A549 (cell line): ENCODE measurements at regions of chr1 and their contacts with region 1.

Region 1: DNA sequence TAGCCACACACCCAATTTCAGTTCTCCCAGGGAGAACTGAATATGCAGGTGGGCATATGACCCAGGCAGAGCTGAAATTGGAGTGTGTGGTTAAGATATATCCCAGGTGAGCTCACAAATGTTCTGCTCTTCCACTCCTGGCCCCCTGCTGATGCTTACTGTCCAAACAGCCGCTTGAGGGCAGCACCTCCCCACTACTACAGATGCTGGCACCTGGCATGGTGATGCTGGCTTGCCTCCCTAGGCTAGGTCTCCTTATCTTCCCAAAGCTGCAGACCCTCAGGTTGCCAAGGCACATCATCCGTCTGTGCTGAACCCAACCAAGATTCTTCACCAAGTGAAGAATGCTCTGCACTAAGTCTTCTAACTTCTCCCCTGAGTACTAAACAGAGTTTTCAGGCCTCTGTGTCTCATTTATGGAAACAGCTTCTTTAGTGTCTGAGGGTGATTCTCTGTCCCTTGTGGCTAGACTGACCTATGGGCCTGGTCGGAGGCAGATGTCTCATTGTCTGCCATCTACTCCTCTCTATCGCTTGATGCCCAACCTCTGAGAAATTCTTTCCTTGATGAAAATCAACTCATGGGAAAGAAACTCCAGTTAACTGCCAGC is 27.2 kb downstream of the XCL1 start:
- DNase-seq: peak; percentile 45 to 73
- ATAC-seq: peak; percentile 98 to 100
- H3K4me3 ChIP-seq: no peak overlapping the region
- H3K27ac ChIP-seq: peak overlapping the region; percentile 12 to 38; a peak in 2 of 6 replicates
- H3K4me1 ChIP-seq: 0 out of 3 replicates have a peak, but pooled peaks cover 3% of the 10 kb centered on the region
- CTCF ChIP-seq: peak; percentile 85
- EP300 ChIP-seq: no peak
- POLR2A ChIP-seq: no peak
- RAD21 ChIP-seq: peak; percentile 96 to 98

Region 2: DNA sequence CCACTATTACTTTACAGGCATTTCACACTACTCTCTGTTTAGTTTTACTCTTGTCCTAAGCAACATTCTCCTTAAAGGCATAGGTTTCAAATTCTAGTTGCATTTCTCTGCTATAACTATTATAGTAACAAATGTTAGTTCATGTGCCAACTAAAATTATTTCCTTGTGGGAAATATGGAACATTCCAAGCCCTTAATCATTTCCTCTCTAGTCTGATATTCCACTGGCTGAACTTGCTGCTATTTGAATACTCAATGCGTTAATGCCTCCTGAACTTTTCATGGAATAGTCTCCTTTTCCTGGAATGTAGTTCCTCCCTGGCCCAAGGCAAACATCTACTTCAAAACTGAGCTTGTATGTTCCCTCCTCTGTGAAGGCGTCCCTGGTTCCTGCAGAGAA is 342.2 kb before region 1 on chr1:
- CTCF ChIA-PET with region 1: no interaction called
- POLR2A ChIA-PET with region 1: no interaction called
- DNase-seq: no peak
- ATAC-seq: no peak
- H3K4me3 ChIP-seq: no peak overlapping the region
- H3K27ac ChIP-seq: no peak overlapping the region
- H3K4me1 ChIP-seq: no peaks in the 10 kb centered on the region
- CTCF ChIP-seq: no peak
- EP300 ChIP-seq: no peak
- POLR2A ChIP-seq: no peak
- RAD21 ChIP-seq: no peak

Region 3: GRCh38 chr1:168439456-168440375 is 163.9 kb before region 1 on chr1:
- CTCF ChIA-PET with region 1: interaction called, 16 read pairs
- POLR2A ChIA-PET with region 1: no interaction called
- DNase-seq: peak; percentile 60 to 86
- ATAC-seq: peak; percentile 95 to 99
- H3K4me3 ChIP-seq: no peak overlapping the region
- H3K27ac ChIP-seq: peak overlapping the region; percentile 10 to 61; a peak in 3 of 6 replicates
- H3K4me1 ChIP-seq: no peaks in the 10 kb centered on the region
- CTCF ChIP-seq: peak; percentile 92
- EP300 ChIP-seq: no peak
- POLR2A ChIP-seq: no peak
- RAD21 ChIP-seq: peak; percentile 96

Region 4: DNA sequence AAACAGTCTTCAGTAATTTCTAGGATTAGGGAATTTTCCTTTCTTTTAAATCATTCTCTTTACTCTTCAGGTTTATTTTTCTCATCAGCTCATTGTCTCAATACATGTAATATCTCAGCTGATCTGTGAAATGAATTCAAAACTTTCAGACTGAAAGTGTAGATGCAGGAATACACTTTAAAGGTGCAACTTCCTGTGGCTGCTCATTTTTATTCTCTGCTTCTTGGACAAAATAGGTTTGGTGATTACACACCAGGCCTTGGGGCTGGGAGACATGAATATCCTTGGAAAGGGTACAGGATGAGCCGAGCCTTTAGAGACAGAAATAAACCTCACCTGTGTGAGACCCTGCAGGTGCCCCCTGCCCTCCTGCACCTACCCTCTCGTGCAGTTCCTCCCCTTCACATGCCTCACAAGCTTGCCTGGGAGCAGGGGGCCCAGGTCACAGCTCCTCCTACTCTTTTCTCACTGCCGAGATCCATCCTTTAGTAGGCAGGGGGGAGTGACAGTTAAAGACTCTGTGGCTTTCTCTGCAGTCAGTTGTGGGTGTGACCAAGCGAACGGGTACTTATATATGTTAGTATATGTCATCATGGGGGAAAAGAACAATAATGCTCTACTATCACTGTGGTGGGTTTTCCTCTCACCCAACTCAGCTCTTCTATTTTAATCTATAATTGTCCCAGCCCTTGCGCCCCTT is 83.4 kb before region 1 on chr1:
- CTCF ChIA-PET with region 1: no interaction called
- POLR2A ChIA-PET with region 1: no interaction called
- DNase-seq: no peak
- ATAC-seq: no peak
- H3K4me3 ChIP-seq: no peak overlapping the region
- H3K27ac ChIP-seq: no peak overlapping the region
- H3K4me1 ChIP-seq: no peaks in the 10 kb centered on the region
- CTCF ChIP-seq: no peak
- EP300 ChIP-seq: no peak
- POLR2A ChIP-seq: no peak
- RAD21 ChIP-seq: no peak

Region 5: DNA sequence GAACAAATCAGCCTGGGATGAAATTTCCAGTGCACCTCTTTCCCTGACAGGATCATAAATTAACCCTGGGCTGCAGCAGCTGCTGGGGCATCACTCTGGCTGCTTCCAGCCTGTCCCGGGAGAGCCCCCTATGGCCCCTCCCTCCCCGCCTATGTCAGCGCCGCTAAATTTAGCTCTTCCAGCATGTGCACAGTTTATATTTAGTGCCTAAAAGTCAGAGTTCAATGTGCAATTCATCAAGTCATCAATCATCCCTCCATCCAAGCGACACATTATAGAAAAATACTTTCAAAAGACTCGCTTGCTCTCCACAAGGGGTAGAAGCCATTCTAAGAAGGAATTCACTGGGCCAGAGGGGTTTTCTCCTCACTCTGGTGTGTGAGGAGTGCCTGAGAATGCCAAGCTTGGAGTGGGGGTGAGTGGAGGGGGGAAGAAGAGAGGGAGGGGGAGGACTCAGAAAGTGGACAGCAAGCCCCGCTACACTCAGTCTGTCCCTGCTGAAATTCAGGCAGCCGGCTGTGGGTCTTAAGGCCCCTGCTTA is 10.2 kb after region 1 on chr1:
- CTCF ChIA-PET with region 1: interaction called, 40 read pairs
- POLR2A ChIA-PET with region 1: no interaction called
- DNase-seq: no peak
- ATAC-seq: no peak
- H3K4me3 ChIP-seq: no peak overlapping the region
- H3K27ac ChIP-seq: no peak overlapping the region
- H3K4me1 ChIP-seq: no peaks in the 10 kb centered on the region
- CTCF ChIP-seq: no peak
- EP300 ChIP-seq: no peak
- POLR2A ChIP-seq: no peak
- RAD21 ChIP-seq: no peak

Region 6: DNA sequence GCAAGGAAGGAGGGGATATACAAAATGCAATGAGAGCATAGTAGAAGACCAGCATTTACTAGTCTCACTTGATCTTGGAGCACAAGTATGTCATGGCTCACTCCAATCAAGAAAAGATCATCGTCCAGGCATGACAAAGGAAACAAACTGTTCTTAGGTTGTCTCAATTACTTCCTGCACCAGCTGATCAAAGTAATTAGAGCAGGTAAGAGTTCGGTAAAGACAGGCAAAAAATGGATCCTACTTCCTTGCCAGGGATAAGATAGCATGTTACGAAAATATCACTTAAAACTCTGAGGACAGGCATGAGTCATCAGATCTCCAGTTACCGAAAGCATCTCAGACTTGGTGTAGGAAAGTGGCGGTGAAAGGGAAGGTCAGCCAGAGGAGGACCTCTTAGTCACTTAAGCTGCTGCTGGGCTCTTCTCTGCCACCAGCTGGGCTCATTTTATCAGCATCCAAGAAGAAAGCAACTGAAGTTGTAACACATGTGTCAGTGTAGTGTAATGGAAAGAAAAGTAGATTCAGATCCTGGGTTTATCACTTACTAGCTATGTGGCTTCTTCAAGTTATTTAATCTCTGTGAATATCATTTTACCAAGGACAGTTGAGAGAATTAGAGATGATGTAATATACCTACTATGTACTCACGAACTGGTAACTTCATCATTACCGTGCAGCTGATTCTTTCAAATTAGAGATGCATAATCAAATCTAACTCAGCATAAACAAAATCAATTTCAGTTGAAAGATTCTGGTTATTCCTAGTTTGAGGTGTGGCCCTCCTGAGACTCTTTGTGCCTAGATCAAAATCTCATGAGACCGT is 19.6 kb after region 1 on chr1:
- CTCF ChIA-PET with region 1: interaction called, 20 read pairs
- POLR2A ChIA-PET with region 1: no interaction called
- DNase-seq: peak; percentile 31 to 85
- ATAC-seq: peak; percentile 94 to 97
- H3K4me3 ChIP-seq: no peak overlapping the region
- H3K27ac ChIP-seq: peak overlapping the region; percentile 47 to 70; a peak in 5 of 6 replicates
- H3K4me1 ChIP-seq: peaks cover 25% of the 10 kb centered on the region
- CTCF ChIP-seq: 0 out of 3 replicates have a peak, but pooled peaks have one; percentile 13
- EP300 ChIP-seq: no peak
- POLR2A ChIP-seq: no peak
- RAD21 ChIP-seq: peak in 1 of 2 experiments; percentile 34; a peak in 2 of 5 replicates

Region 7: GRCh38 chr1:168709405-168710305 is 106.0 kb after region 1 on chr1:
- CTCF ChIA-PET with region 1: interaction called, 10 read pairs
- POLR2A ChIA-PET with region 1: interaction called, 3 read pairs
- DNase-seq: peak; percentile 77 to 90
- ATAC-seq: peak; percentile 84 to 86
- H3K4me3 ChIP-seq: peak overlapping the region; percentile 24; the same call in 2 of the 3 replicates
- H3K27ac ChIP-seq: peak overlapping the region; percentile 87 to 89
- H3K4me1 ChIP-seq: peaks cover 31% of the 10 kb centered on the region
- CTCF ChIP-seq: no peak
- EP300 ChIP-seq: peak; percentile 82 to 86; a peak in 4 of 5 replicates
- POLR2A ChIP-seq: no peak
- RAD21 ChIP-seq: peak; percentile 36 to 50; a peak in 3 of 5 replicates

Region 8: DNA sequence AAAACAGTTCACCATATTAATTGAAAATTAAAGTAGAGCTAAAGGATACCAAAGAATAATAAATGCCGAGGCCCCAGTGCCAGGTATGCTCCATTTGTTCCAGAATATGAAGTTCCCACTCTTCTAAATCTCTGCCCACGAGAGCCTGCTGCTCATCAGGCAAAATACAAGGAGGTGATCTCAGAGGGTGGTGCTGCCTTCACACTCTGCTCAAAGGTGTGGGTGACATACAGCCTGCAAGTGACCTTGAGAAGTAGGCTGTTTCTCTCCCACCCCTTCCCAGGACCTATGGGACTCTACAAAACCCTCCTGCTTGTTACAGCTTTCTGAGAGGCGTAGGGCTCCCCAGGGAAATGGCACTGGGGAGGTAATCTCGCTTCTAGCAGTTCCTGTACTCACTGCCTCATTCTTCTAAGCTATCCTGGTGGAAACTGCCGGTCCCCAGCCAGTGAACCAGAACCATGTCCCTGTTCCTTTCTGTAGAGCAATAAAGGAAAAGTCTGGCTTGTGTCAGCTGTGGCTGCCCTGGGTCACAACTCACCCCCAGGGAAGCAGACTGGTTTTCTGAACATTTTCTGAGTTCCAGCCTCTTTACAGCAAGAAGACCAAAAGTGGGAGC is 152.3 kb after region 1 on chr1:
- CTCF ChIA-PET with region 1: no interaction called
- POLR2A ChIA-PET with region 1: no interaction called
- DNase-seq: no peak
- ATAC-seq: no peak
- H3K4me3 ChIP-seq: no peak overlapping the region
- H3K27ac ChIP-seq: 0 out of 6 replicates have a peak overlapping the region, but pooled peaks of 1 of the 2 experiments have one; percentile 16
- H3K4me1 ChIP-seq: peaks cover 22% of the 10 kb centered on the region
- CTCF ChIP-seq: no peak
- EP300 ChIP-seq: no peak
- POLR2A ChIP-seq: no peak
- RAD21 ChIP-seq: no peak

Region 9: DNA sequence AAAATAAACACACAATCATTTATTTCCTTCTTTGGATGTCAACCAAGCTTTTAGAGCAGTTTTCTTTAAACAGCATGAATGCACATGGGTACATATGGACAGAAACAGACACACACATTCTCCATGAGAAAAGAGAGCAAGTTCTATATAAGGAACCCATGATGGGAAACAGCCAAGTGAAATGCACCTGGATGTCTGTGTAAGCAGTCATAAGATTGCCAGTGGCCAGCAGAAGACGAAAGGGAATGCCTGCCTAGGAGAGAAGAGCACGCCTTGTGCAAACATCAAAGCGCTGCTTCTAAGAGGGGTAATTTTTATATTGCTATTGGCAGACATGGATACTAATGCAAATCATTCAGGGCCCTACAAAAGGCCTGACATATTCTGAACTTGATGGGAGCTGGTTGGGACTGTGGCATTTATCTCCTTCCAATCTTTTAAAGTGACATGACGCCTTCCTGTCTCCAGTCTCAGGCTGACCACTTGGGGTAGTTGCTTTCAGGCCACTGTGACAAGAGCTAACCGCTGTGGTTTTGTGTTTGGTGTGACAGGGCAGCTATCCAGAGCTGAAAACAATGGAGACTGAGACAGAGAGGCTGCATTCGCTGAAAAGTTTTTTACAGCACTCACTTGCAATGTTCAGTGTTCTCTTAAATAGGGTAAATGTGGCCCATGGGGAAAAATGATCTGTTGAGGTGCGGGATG is 200.4 kb after region 1 on chr1:
- CTCF ChIA-PET with region 1: no interaction called
- POLR2A ChIA-PET with region 1: no interaction called
- DNase-seq: no peak
- ATAC-seq: no peak
- H3K4me3 ChIP-seq: no peak overlapping the region
- H3K27ac ChIP-seq: 0 out of 6 replicates have a peak overlapping the region, but pooled peaks of 1 of the 2 experiments have one; percentile 5
- H3K4me1 ChIP-seq: peaks cover 39% of the 10 kb centered on the region
- CTCF ChIP-seq: no peak
- EP300 ChIP-seq: no peak
- POLR2A ChIP-seq: no peak
- RAD21 ChIP-seq: no peak

Region 10: DNA sequence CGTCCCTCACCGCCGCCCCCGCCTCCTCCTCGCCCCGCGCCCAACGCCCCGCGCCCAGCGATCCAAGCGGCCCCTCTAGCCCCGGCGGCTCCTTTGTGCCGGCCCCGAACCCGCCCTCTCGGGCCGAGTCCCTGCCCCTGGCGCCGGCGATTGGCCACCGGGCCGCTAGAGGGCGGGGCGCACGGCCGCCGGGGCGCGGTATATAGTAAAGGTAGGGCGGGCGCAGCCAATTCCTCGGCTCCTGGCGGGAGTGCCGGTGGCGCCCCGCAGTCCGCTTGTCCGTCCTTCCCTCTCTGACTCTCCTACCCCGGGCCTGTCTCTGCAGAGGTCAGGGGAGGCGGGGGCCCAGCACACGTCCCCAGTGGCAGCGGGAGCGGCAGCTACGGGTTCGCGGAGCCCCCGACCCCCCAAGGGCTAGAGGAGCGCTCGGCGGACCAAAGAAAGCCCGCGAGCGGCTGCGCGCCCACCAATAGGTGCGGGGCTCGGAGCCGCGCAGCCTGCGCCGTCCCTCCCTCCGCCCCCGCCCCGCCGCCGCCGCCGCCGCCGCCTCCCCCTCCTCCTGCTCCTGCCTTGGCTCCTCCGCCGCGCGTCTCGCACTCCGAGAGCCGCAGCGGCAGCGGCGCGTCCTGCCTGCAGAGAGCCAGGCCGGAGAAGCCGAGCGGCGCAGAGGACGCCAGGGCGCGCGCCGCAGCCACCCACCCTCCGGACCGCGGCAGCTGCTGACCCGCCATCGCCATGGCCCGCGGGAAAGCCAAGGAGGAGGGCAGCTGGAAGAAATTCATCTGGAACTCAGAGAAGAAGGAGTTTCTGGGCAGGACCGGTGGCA is 502.7 kb after region 1 on chr1 and contains the start of gene ATP1B1:
- CTCF ChIA-PET with region 1: interaction called, 18 read pairs
- POLR2A ChIA-PET with region 1: interaction called, 3 read pairs
- DNase-seq: peak; percentile 90 to 91
- ATAC-seq: peak; percentile 63 to 83
- H3K4me3 ChIP-seq: peak within 1 kb of the TSS; percentile 92
- H3K27ac ChIP-seq: peak within 1 kb of the TSS; percentile 96 to 98
- H3K4me1 ChIP-seq: peaks cover 43% of the 10 kb centered on the region
- CTCF ChIP-seq: no peak
- EP300 ChIP-seq: no peak
- POLR2A ChIP-seq: peak; percentile 97
- RAD21 ChIP-seq: peak; percentile 10 to 50; a peak in 3 of 5 replicates
- polyA plus RNA-seq, gene ATP1B1: 323 and 377 TPM in 2 replicates

Region 11: DNA sequence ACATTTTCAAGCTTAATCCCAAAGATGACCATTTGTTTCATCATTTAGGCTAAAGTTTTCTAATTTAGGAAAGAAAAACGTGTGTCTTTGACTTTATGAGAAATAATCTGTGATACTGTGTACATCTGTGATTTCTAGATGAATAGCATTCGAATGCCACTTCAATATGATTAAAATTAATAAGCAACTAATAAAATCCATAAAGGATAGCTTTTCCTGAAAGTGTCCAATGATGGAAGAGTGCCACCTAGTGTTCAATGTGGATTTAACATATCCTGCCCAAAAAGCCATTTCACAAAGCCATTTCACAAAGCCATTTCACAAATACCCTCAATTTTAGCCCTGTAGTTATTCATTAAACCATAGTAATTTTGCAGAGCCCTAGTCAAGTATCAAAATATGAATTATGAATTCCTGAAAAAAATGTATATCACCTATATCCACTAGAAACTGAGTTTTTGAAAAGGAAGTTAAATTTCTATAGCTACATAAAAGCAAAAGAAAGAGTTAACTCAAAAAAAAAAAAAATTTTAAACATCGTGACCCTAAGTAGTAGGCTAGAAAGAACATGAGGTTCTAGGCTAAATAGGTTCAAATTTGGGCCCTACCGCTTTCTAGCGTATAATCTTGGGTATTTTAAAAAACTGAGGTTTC is 744.9 kb after region 1 on chr1:
- CTCF ChIA-PET with region 1: interaction called, 157 read pairs
- POLR2A ChIA-PET with region 1: interaction called, 4 read pairs
- DNase-seq: peak in 1 of 2 experiments; percentile 65
- ATAC-seq: peak in 1 of 2 experiments; percentile 68; a peak in 3 of 6 replicates
- H3K4me3 ChIP-seq: no peak overlapping the region
- H3K27ac ChIP-seq: peak overlapping the region in 1 of 2 experiments; percentile 23; a peak in 3 of 6 replicates
- H3K4me1 ChIP-seq: peaks cover 16% of the 10 kb centered on the region
- CTCF ChIP-seq: peak; percentile 91
- EP300 ChIP-seq: no peak
- POLR2A ChIP-seq: no peak
- RAD21 ChIP-seq: peak; percentile 97